Dendritic cell treated with granulocyte-macrophage colony-stimulating factor and Interleukin-4, amounts not matched to agents 40 ng/mL and 50 ng/mL, for 4 days (primary cell): ENCODE measurements at regions of chr6 and their contacts with region 1.

Region 1: DNA sequence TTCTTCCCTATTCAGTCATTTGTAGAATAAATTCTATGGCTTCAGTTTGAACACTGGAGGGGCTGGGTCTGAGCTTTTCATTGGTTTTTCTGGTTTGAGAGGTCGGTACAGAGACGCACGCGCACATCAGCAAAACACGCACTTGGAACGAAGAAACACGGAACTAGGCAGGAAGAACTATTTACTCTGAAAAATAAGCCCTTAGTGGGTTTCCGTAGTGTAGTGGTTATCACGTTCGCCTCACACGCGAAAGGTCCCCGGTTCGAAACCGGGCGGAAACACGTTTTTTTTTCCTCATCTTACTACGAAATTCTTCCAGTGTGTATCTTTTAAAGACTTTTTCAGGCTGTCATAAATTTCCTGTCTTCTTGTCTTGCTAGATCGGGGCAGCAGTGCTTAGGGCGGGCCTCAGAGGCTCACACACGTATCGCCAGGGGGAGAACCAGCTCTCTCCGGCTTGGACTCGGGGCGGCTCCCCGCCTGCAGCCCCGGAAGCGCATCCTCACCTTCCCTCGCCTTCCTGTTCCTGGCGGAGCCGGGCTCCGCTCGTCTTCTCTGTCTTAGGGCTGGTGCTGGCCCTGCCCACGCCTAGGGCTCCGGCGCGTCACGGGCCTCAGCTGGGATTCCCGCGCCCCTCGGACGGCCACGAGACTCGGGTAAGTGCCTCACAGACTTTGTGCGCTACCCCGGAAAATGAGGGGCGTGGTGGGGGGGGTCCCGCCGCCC is at the start of gene HMGN4:
- H3K4me3 Mint-ChIP-seq: peak within 1 kb of the TSS; percentile 84
- H3K27ac Mint-ChIP-seq: peak within 1 kb of the TSS; percentile 94
- H3K4me1 Mint-ChIP-seq: peaks cover 54% of the 10 kb centered on the region
- H3K27me3 Mint-ChIP-seq: no peaks in the 10 kb centered on the region

Region 2: DNA sequence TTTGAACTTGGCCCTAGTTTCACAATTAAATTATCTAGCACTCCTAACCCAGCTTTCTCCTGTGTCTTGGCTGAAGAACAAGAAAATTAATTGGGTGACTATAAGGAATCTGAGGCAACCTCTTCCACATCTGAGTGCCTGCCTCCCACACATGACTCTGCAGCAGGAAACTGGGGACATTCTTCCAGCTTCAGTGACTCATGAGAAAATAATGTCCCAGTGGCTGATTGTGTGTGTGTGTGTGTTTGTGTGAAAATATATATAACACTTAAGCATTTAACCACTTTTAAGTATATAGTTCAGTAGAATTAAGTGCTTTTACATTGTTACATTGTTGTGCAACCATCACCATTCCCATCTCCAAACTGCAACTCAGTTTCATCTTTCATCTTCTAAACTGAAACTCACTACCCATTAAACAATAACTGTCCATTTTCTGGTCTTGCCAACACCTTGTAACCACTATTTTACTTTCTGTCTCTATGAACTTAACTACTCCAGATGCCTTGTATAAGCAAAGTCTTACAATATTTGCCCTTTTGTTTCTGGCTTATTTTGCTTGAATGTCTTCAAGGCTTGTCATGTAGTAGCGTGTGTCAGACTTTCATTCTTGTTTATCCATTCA is 566.7 kb before region 1 on chr6:
- intact Hi-C with region 1: no loop called
- H3K4me3 Mint-ChIP-seq: no peak overlapping the region
- H3K27ac Mint-ChIP-seq: peak overlapping the region; percentile 5
- H3K4me1 Mint-ChIP-seq: peaks cover 50% of the 10 kb centered on the region
- H3K27me3 Mint-ChIP-seq: no peaks in the 10 kb centered on the region

Region 3: DNA sequence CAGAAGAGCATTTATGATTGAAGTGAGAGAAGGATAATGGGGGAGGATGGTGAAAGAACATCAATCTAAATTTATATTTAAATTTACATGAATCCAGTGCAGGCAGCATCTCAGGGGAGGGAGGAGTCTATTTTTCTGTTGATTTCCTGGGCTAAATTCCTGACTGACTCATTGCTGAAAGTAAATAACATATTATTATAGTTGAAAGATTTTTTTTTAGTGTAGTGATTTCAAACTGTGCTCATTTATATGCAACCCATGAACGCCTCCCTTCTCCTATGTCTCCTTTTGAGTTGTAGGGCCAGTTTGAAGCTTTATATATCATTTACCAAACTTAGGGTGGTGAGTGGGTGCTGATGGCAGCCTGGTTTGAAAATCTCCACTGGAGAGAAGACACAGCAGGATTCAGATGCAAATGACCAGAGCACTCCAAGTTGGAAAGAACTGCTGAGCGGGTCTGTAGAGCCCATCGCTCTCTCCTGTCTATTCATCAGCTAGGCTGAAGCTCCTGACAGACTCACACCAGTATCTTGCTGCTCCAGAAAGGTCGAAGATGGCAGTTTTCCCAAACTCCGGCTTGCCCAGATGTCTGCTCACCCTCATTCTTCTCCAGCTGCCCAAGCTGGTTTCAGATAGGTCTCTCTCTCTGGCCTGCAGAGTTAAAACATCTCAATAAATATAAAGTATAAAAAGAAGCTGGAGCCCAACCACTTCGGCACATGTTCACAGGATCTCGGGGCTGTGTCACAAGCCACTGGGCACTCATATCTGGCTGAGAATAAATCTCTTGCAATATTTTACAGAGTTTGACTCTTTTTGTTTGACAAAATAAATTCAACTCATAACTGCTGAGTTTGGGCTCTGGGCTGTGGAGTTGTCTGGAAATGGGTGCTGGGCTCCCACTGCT is 61.9 kb before region 1 on chr6:
- intact Hi-C with region 1: loop called (anchors 5 kb)
- H3K4me3 Mint-ChIP-seq: peak overlapping the region; percentile 67
- H3K27ac Mint-ChIP-seq: peak overlapping the region; percentile 89
- H3K4me1 Mint-ChIP-seq: peaks cover 87% of the 10 kb centered on the region
- H3K27me3 Mint-ChIP-seq: no peaks in the 10 kb centered on the region